Activated B cell treated with CpG ODN at 0.5 μM for 24 hours (primary cell): ENCODE measurements at regions of chr9 and their contacts with region 1.

Region 1: GRCh38 chr9:109903515-109904138 is 123.6 kb downstream of the PALM2AKAP2 start:
- DNase-seq: no peak
- ATAC-seq: peak; percentile 65
- H3K4me3 Mint-ChIP-seq: no peak overlapping the region
- H3K27ac Mint-ChIP-seq: peak overlapping the region; percentile 69
- H3K4me1 Mint-ChIP-seq: peaks cover 21% of the 10 kb centered on the region
- H3K27me3 Mint-ChIP-seq: no peaks in the 10 kb centered on the region
- CTCF ChIP-seq: peak; percentile 25

Region 2: DNA sequence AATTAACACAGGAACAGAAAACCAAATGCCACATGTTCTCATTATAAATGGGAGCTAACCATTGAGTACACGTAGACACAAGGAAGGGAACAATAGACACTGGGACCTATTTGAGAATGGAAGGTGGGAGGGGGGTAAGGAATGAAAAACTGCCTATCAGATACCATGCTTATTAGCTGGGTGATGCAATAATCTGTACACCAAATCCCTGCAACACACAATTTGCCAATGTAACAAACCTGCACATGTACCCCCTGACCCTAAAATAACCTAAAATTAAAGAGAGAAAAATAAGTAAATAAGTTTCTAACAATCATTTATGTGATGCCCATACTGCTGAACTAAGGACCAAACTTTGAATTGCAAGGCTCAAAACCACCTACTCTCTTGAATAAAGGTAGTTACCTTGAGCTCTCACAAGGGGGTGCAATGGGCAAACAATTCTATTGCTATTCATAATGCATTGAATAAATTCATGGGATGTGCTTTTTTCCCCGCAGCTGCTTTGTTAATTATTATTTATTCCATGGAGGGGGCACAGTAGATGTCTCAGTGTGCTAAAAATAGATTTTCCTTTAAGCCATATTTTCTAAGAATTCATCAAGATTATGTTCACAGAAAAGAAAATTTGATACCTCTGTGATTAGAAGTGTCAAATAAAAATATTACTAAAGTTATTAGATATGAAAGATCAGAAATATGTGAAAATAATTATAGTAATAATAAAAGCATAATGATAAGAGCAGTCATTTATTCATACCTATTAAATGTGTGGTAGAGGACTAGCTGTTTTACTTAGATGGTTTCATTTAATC is 329.4 kb before region 1 on chr9:
- CTCF ChIA-PET with region 1: interaction called, 9 read pairs
- POLR2A ChIA-PET with region 1: no interaction called
- intact Hi-C with region 1: loop called (anchors 5 kb)
- DNase-seq: no peak
- ATAC-seq: peak; percentile 47
- H3K4me3 Mint-ChIP-seq: no peak overlapping the region
- H3K27ac Mint-ChIP-seq: no peak overlapping the region
- H3K4me1 Mint-ChIP-seq: no peaks in the 10 kb centered on the region
- H3K27me3 Mint-ChIP-seq: peaks cover 4% of the 10 kb centered on the region
- CTCF ChIP-seq: no peak

Region 3: DNA sequence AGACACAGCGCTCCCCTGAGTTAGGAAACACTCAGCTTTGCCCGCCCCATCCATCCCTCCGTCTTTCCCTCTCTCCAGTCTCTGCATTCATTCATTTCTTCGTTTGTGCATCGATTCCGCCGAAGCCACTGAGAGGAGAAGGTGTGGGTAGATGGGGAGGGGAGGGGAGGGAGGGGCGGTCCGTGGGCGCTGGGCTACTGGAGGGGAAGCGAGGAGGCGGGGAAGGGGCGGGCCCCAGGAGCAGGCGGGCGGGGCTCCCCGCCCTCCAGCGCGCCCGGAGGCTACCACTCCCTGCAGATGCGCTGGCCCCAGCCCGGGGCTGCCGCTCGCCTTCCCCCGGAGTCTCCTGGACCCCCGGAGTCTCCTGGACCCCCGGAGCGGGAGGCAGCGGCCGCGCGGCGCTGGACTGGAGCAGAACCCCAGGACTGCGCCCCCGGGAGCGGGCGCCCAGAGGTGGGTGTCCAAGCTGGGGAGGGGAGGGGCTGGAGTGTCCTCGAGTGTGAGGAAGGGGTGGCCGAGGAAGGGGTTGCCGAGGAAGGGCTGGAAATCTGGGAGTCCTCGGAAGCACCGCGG is 144.9 kb after region 1 on chr9:
- CTCF ChIA-PET with region 1: interaction called, 25 read pairs
- POLR2A ChIA-PET with region 1: interaction called, 137 read pairs
- intact Hi-C with region 1: loop called (anchors 2 kb)
- DNase-seq: peak; percentile 85
- ATAC-seq: peak; percentile 94
- H3K4me3 Mint-ChIP-seq: peak overlapping the region; percentile 99
- H3K27ac Mint-ChIP-seq: peak overlapping the region; percentile 91
- H3K4me1 Mint-ChIP-seq: peaks cover 54% of the 10 kb centered on the region
- H3K27me3 Mint-ChIP-seq: no peaks in the 10 kb centered on the region
- CTCF ChIP-seq: no peak

Region 4: GRCh38 chr9:110125207-110125751 is 221.7 kb after region 1 on chr9:
- CTCF ChIA-PET with region 1: interaction called, 7 read pairs
- POLR2A ChIA-PET with region 1: interaction called, 17 read pairs
- intact Hi-C with region 1: no loop called
- DNase-seq: no peak
- ATAC-seq: no peak
- H3K4me3 Mint-ChIP-seq: peak overlapping the region; percentile 71
- H3K27ac Mint-ChIP-seq: peak overlapping the region; percentile 85
- H3K4me1 Mint-ChIP-seq: peaks cover 97% of the 10 kb centered on the region
- H3K27me3 Mint-ChIP-seq: no peaks in the 10 kb centered on the region
- CTCF ChIP-seq: no peak

Region 5: GRCh38 chr9:110152704-110153374 is 249.2 kb after region 1 on chr9:
- CTCF ChIA-PET with region 1: interaction called, 140 read pairs
- POLR2A ChIA-PET with region 1: interaction called, 11 read pairs
- intact Hi-C with region 1: loop called (anchors 1 kb)
- DNase-seq: no peak
- ATAC-seq: peak; percentile 32
- H3K4me3 Mint-ChIP-seq: peak overlapping the region; percentile 39
- H3K27ac Mint-ChIP-seq: peak overlapping the region; percentile 81
- H3K4me1 Mint-ChIP-seq: peaks cover 100% of the 10 kb centered on the region
- H3K27me3 Mint-ChIP-seq: no peaks in the 10 kb centered on the region
- CTCF ChIP-seq: no peak

Region 6: DNA sequence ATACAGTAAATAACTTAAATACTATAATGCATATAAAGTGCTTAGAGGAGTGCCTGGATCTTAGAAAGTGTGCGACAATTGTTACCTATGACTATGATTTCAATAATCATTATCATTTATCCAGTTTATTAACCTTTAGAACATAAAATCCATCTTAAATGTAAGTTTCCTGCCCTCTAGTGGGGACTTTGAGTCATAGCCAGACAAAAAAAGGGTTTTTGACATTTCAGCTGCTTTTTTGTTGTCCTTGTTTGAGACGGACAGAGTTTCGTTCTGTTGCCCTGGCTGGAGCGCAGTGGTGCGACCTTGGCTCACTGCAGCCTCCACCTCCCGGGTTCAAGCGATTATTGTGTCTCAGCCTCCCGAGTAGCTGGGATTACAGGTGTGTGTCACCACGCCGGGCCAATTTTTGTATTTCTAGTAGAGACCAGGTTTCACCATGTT is 314.1 kb after region 1 on chr9:
- CTCF ChIA-PET with region 1: interaction called, 48 read pairs
- POLR2A ChIA-PET with region 1: no interaction called
- intact Hi-C with region 1: loop called (anchors 1 kb)
- DNase-seq: no peak
- ATAC-seq: no peak
- H3K4me3 Mint-ChIP-seq: no peak overlapping the region
- H3K27ac Mint-ChIP-seq: no peak overlapping the region
- H3K4me1 Mint-ChIP-seq: peaks cover 4% of the 10 kb centered on the region
- H3K27me3 Mint-ChIP-seq: peaks cover 2% of the 10 kb centered on the region
- CTCF ChIP-seq: no peak